ENCODE measurements at regions of chr19 and their contacts with region 1.

Region 1: GRCh38 chr19:41746593-41747227 is 8.6 kb upstream of the CEACAM6 start:
- DNase-seq: peak; percentile 76
- ATAC-seq: peak; percentile 90
- H3K4me3 ChIP-seq: no peak overlapping the region
- H3K27ac ChIP-seq: no peak overlapping the region
- H3K4me1 ChIP-seq: peaks cover 11% of the 10 kb centered on the region; the same call in 1 of the 2 replicates
- H3K27me3 ChIP-seq: no peaks in the 10 kb centered on the region
- CTCF ChIP-seq: peak; percentile 76

Region 2: GRCh38 chr19:41641879-41642485 is 104.7 kb before region 1 on chr19:
- CTCF ChIA-PET with region 1: no interaction called
- POLR2A ChIA-PET with region 1: no interaction called
- intact Hi-C with region 1: loop called (anchors 5 kb)
- DNase-seq: peak; percentile 71
- ATAC-seq: peak; percentile 85
- H3K4me3 ChIP-seq: no peak overlapping the region
- H3K27ac ChIP-seq: no peak overlapping the region
- H3K4me1 ChIP-seq: no peaks in the 10 kb centered on the region
- H3K27me3 ChIP-seq: peaks cover 12% of the 10 kb centered on the region; the same call in 1 of the 2 replicates
- CTCF ChIP-seq: peak; percentile 86

Region 3: DNA sequence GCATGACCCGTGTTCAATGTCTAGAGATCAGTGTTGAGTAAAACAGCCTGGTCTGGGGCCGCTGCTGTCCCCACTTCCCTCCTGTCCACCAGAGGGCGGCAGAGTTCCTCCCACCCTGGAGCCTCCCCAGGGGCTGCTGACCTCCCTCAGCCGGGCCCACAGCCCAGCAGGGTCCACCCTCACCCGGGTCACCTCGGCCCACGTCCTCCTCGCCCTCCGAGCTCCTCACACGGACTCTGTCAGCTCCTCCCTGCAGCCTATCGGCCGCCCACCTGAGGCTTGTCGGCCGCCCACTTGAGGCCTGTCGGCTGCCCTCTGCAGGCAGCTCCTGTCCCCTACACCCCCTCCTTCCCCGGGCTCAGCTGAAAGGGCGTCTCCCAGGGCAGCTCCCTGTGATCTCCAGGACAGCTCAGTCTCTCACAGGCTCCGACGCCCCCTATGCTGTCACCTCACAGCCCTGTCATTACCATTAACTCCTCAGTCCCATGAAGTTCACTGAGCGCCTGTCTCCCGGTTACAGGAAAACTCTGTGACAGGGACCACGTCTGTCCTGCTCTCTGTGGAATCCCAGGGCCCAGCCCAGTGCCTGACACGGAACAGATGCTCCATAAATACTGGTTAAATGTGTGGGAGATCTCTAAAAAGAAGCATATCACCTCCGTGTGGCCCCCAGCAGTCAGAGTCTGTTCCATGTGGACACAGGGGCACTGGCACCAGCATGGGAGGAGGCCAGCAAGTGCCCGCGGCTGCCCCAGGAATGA is 39.8 kb before region 1 on chr19:
- CTCF ChIA-PET with region 1: no interaction called
- POLR2A ChIA-PET with region 1: no interaction called
- intact Hi-C with region 1: loop called (anchors 1 kb)
- DNase-seq: peak; percentile 71
- ATAC-seq: peak; percentile 93
- H3K4me3 ChIP-seq: peak overlapping the region; percentile 63
- H3K27ac ChIP-seq: no peak overlapping the region
- H3K4me1 ChIP-seq: peaks cover 5% of the 10 kb centered on the region; the same call in 1 of the 2 replicates
- H3K27me3 ChIP-seq: no peaks in the 10 kb centered on the region
- CTCF ChIP-seq: peak; percentile 97

Region 4: DNA sequence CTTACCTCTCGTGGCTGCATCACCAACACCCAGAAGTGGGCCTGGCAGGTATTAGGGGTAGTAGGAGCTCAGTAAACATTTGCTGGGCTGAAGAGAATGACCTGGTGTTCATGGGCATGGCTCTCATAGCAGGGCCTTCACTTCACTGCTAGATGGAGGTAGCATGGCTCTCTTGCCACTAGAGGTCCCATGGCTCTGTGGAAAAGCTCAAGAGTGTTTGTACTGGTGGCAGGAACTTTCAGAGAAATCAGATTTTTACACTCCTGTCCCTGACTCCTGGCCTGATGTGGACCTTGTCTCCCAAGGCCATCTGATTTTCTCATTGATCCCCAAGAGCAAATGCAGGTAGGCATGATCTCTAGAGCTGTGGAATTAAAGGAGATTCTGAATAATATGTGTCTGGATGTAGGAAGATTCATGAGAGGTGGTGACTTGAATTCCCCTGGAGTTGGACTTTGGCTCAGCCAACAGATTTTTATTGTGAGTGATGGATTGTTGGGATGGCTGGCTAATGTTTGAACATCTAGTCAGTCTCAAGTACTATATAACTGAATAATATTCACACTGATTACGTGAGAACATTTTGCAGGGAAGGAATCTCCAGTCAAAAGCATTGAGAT is 335.0 kb after region 1 on chr19:
- CTCF ChIA-PET with region 1: no interaction called
- POLR2A ChIA-PET with region 1: no interaction called
- intact Hi-C with region 1: no loop called
- DNase-seq: peak; percentile 49
- ATAC-seq: peak; percentile 64
- H3K4me3 ChIP-seq: no peak overlapping the region
- H3K27ac ChIP-seq: no peak overlapping the region
- H3K4me1 ChIP-seq: peaks cover 17% of the 10 kb centered on the region; the same call in 1 of the 2 replicates
- H3K27me3 ChIP-seq: no peaks in the 10 kb centered on the region
- CTCF ChIP-seq: peak; percentile 56

Measured in PC-3 (cell line).